GM12878 (cell line): ENCODE measurements at regions of chr17 and their contacts with region 1.

Region 1: GRCh38 chr17:4220655-4221054 is 43.1 kb downstream of the ANKFY1 start:
- DNase-seq: no peak
- ATAC-seq: no peak
- H3K4me3 ChIP-seq: no peak overlapping the region
- H3K27ac ChIP-seq: no peak overlapping the region
- H3K4me1 ChIP-seq: no peaks in the 10 kb centered on the region
- H3K27me3 ChIP-seq: no peaks in the 10 kb centered on the region
- CTCF ChIP-seq: no peak
- EP300 ChIP-seq: no peak
- POLR2A ChIP-seq: no peak
- RAD21 ChIP-seq: no peak

Region 2: GRCh38 chr17:4110152-4110551 is 110.5 kb before region 1 on chr17:
- CTCF ChIA-PET with region 1: no interaction called
- POLR2A ChIA-PET with region 1: no interaction called
- RAD21 ChIA-PET with region 1: no interaction called
- SMC1A ChIA-PET with region 1: no interaction called
- in situ Hi-C with region 1: no loop called
- intact Hi-C with region 1: no loop called
- DNase-seq: no peak
- ATAC-seq: no peak
- H3K4me3 ChIP-seq: no peak overlapping the region
- H3K27ac ChIP-seq: no peak overlapping the region
- H3K4me1 ChIP-seq: no peaks in the 10 kb centered on the region
- H3K27me3 ChIP-seq: no peaks in the 10 kb centered on the region
- CTCF ChIP-seq: no peak
- EP300 ChIP-seq: no peak
- POLR2A ChIP-seq: no peak
- RAD21 ChIP-seq: no peak

Region 3: GRCh38 chr17:4249452-4250029 is 28.9 kb after region 1 on chr17:
- CTCF ChIA-PET with region 1: interaction called, 47 read pairs
- POLR2A ChIA-PET with region 1: no interaction called
- RAD21 ChIA-PET with region 1: interaction called, 6 read pairs
- SMC1A ChIA-PET with region 1: interaction called, 26 read pairs
- in situ Hi-C with region 1: no loop called
- intact Hi-C with region 1: loop called (anchors 5 kb)
- DNase-seq: no peak
- ATAC-seq: peak; percentile 79
- H3K4me3 ChIP-seq: no peak overlapping the region
- H3K27ac ChIP-seq: no peak overlapping the region
- H3K4me1 ChIP-seq: peaks cover 5% of the 10 kb centered on the region
- H3K27me3 ChIP-seq: no peaks in the 10 kb centered on the region
- CTCF ChIP-seq: peak; percentile 45 to 62 (median 53)
- EP300 ChIP-seq: no peak
- POLR2A ChIP-seq: no peak
- RAD21 ChIP-seq: peak; percentile 23; the same call in 1 of the 2 replicates

Region 4: GRCh38 chr17:4293572-4293971 is 72.9 kb after region 1 on chr17:
- CTCF ChIA-PET with region 1: interaction called, 15 read pairs
- POLR2A ChIA-PET with region 1: no interaction called
- RAD21 ChIA-PET with region 1: interaction called, 7 read pairs
- SMC1A ChIA-PET with region 1: interaction called, 18 read pairs
- in situ Hi-C with region 1: no loop called
- intact Hi-C with region 1: no loop called
- DNase-seq: peak; percentile 19
- ATAC-seq: peak; percentile 84
- H3K4me3 ChIP-seq: no peak overlapping the region
- H3K27ac ChIP-seq: peak overlapping the region; percentile 56
- H3K4me1 ChIP-seq: peaks cover 35% of the 10 kb centered on the region
- H3K27me3 ChIP-seq: no peaks in the 10 kb centered on the region
- CTCF ChIP-seq: no peak
- EP300 ChIP-seq: peak in 1 of 2 experiments; percentile 55; a peak in 1 of 4 replicates
- POLR2A ChIP-seq: no peak
- RAD21 ChIP-seq: no peak

Region 5: GRCh38 chr17:4366327-4367063 is 145.8 kb after region 1 on chr17 and contains the start of gene UBE2G1:
- CTCF ChIA-PET with region 1: interaction called, 15 read pairs
- POLR2A ChIA-PET with region 1: no interaction called
- RAD21 ChIA-PET with region 1: interaction called, 5 read pairs
- SMC1A ChIA-PET with region 1: interaction called, 5 read pairs
- in situ Hi-C with region 1: no loop called
- intact Hi-C with region 1: loop called (anchors 2 kb)
- DNase-seq: peak; percentile 89
- ATAC-seq: peak; percentile 89
- H3K4me3 ChIP-seq: peak within 1 kb of the TSS; percentile 66
- H3K27ac ChIP-seq: peak within 1 kb of the TSS; percentile 88
- H3K4me1 ChIP-seq: peaks cover 10% of the 10 kb centered on the region
- H3K27me3 ChIP-seq: no peaks in the 10 kb centered on the region
- CTCF ChIP-seq: peak; percentile 26 to 50 (median 34); a peak in 4 of 6 replicates
- EP300 ChIP-seq: no peak
- POLR2A ChIP-seq: peak; percentile 91
- RAD21 ChIP-seq: peak; percentile 61
- polyA plus RNA-seq, gene UBE2G1: 24.4 to 35.2 TPM

Region 6: DNA sequence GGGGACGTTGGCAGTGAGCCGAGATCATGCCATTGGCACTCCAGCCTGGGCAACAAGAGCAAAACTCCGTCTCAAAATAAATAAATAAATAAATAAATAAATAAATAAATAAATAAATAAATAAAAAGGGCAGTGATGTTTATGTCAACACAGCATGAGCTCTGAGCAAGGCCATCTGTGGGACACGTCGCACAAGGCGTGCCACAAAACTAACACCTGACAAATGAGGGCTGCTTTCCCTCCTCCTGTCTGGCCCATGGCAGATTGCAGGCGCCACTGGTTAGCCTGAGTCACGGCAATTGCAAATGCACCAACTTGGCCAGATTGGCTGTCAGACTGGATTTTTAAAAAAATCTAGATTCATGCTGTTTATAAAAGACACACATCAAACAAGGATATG is 187.2 kb after region 1 on chr17:
- CTCF ChIA-PET with region 1: interaction called, 156 read pairs
- POLR2A ChIA-PET with region 1: interaction called, 5 read pairs
- RAD21 ChIA-PET with region 1: interaction called, 79 read pairs
- SMC1A ChIA-PET with region 1: interaction called, 45 read pairs
- in situ Hi-C with region 1: no loop called
- intact Hi-C with region 1: loop called (anchors 1 kb)
- DNase-seq: no peak
- ATAC-seq: no peak
- H3K4me3 ChIP-seq: no peak overlapping the region
- H3K27ac ChIP-seq: no peak overlapping the region
- H3K4me1 ChIP-seq: peaks cover 7% of the 10 kb centered on the region
- H3K27me3 ChIP-seq: no peaks in the 10 kb centered on the region
- CTCF ChIP-seq: no peak
- EP300 ChIP-seq: no peak
- POLR2A ChIP-seq: no peak
- RAD21 ChIP-seq: no peak

Region 7: DNA sequence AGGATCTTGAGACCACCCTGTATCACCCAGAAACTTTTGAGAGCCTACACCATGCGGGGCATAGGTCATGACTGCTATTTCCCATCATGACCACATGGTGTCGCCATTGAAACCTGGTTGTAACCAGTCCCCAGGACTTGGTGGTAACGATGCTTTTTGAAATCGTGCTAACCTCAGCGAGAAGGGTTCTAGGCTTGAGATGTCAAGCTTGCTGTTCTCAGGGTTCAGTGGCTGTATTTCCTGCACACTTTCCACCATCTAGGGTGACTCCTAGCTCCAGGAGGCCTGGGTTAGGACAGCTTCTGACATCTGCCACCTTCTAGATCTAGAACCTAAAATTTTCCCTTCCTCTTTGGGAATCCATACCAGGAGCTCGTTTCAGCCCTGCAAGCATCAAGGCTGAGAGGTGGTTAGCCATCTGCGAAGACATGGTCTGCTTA is 200.1 kb after region 1 on chr17:
- CTCF ChIA-PET with region 1: interaction called, 156 read pairs
- POLR2A ChIA-PET with region 1: no interaction called
- RAD21 ChIA-PET with region 1: interaction called, 31 read pairs
- SMC1A ChIA-PET with region 1: interaction called, 31 read pairs
- in situ Hi-C with region 1: no loop called
- intact Hi-C with region 1: no loop called
- DNase-seq: peak; percentile 37
- ATAC-seq: peak; percentile 98
- H3K4me3 ChIP-seq: no peak overlapping the region
- H3K27ac ChIP-seq: no peak overlapping the region
- H3K4me1 ChIP-seq: no peaks in the 10 kb centered on the region
- H3K27me3 ChIP-seq: no peaks in the 10 kb centered on the region
- CTCF ChIP-seq: peak; percentile 89 to 93 (median 91)
- EP300 ChIP-seq: no peak
- POLR2A ChIP-seq: no peak
- RAD21 ChIP-seq: peak; percentile 91

Region 8: DNA sequence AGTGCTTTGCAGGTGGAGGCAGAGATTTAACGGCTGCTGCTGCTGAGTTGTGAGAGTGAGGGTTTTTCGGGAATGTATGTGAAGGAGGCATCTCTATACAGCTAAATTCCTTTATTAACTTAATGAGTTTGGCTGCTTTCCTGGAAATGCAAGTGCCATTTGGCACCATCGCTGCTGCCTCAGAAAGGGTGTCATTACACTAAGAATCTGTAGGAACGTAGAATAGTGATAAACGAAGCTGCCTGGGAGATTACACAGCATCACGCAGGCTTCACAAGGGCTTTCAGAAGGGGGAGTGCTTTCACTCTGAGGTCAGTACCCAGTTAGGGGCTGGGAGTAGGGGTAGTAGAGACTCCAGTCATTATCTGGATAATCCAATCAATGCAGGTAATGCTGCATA is 1377.8 kb after region 1 on chr17:
- CTCF ChIA-PET with region 1: no interaction called
- POLR2A ChIA-PET with region 1: no interaction called
- RAD21 ChIA-PET with region 1: no interaction called
- SMC1A ChIA-PET with region 1: no interaction called
- in situ Hi-C with region 1: no loop called
- intact Hi-C with region 1: no loop called
- DNase-seq: no peak
- ATAC-seq: no peak
- H3K4me3 ChIP-seq: no peak overlapping the region
- H3K27ac ChIP-seq: no peak overlapping the region
- H3K4me1 ChIP-seq: no peaks in the 10 kb centered on the region
- H3K27me3 ChIP-seq: peaks cover 0 to 3% of the 10 kb centered on the region in 2 experiments; a peak in 2 of 4 replicates
- CTCF ChIP-seq: no peak
- EP300 ChIP-seq: no peak
- POLR2A ChIP-seq: no peak
- RAD21 ChIP-seq: no peak